ENCODE measurements at regions of chr3 and their contacts with region 1.

Region 1: GRCh38 chr3:52278510-52279069 is at the start of gene WDR82:
- DNase-seq: peak; percentile 67 to 96
- H3K4me3 ChIP-seq: peak within 1 kb of the TSS; percentile 78
- H3K27ac ChIP-seq: peak within 1 kb of the TSS; percentile 75
- H3K4me1 ChIP-seq: peaks cover 23% of the 10 kb centered on the region
- H3K27me3 ChIP-seq: no peaks in the 10 kb centered on the region
- CTCF ChIP-seq: peak; percentile 45
- total RNA-seq, gene WDR82: 34.2 and 44.5 TPM in 2 replicates

Region 2: GRCh38 chr3:51974963-51975851 is 303.4 kb before region 1 on chr3 and contains the start of gene ABHD14A:
- CTCF ChIA-PET with region 1: no interaction called
- POLR2A ChIA-PET with region 1: interaction called, 11 read pairs
- intact Hi-C with region 1: no loop called
- DNase-seq: peak in 1 of 2 experiments; percentile 76
- H3K4me3 ChIP-seq: peak within 1 kb of the TSS; percentile 97
- H3K27ac ChIP-seq: 0 out of 2 replicates have a peak within 1 kb of the TSS, but pooled peaks have one; percentile 5
- H3K4me1 ChIP-seq: peaks cover 8% of the 10 kb centered on the region; the same call in 1 of the 2 replicates
- H3K27me3 ChIP-seq: no peaks in the 10 kb centered on the region
- CTCF ChIP-seq: no peak
- total RNA-seq, gene ABHD14A: 7.1 and 9.9 TPM in 2 replicates

Region 3: GRCh38 chr3:52001443-52001974 is 277.1 kb before region 1 on chr3:
- CTCF ChIA-PET with region 1: no interaction called
- POLR2A ChIA-PET with region 1: no interaction called
- intact Hi-C with region 1: loop called (anchors 5 kb)
- DNase-seq: peak in 1 of 2 experiments; percentile 73
- H3K4me3 ChIP-seq: no peak overlapping the region
- H3K27ac ChIP-seq: no peak overlapping the region
- H3K4me1 ChIP-seq: peaks cover 13% of the 10 kb centered on the region
- H3K27me3 ChIP-seq: no peaks in the 10 kb centered on the region
- CTCF ChIP-seq: peak; percentile 92

Region 4: GRCh38 chr3:52154117-52155094 is 124.2 kb before region 1 on chr3 and contains the start of gene POC1A:
- CTCF ChIA-PET with region 1: interaction called, 3 read pairs
- POLR2A ChIA-PET with region 1: no interaction called
- intact Hi-C with region 1: loop called (anchors 5 kb)
- DNase-seq: peak; percentile 93
- H3K4me3 ChIP-seq: peak within 1 kb of the TSS; percentile 90
- H3K27ac ChIP-seq: peak within 1 kb of the TSS; percentile 68
- H3K4me1 ChIP-seq: peaks cover 16% of the 10 kb centered on the region
- H3K27me3 ChIP-seq: no peaks in the 10 kb centered on the region
- CTCF ChIP-seq: no peak; the same call in 1 of the 2 replicates
- total RNA-seq, gene POC1A: 28.8 and 35.0 TPM in 2 replicates

Region 5: DNA sequence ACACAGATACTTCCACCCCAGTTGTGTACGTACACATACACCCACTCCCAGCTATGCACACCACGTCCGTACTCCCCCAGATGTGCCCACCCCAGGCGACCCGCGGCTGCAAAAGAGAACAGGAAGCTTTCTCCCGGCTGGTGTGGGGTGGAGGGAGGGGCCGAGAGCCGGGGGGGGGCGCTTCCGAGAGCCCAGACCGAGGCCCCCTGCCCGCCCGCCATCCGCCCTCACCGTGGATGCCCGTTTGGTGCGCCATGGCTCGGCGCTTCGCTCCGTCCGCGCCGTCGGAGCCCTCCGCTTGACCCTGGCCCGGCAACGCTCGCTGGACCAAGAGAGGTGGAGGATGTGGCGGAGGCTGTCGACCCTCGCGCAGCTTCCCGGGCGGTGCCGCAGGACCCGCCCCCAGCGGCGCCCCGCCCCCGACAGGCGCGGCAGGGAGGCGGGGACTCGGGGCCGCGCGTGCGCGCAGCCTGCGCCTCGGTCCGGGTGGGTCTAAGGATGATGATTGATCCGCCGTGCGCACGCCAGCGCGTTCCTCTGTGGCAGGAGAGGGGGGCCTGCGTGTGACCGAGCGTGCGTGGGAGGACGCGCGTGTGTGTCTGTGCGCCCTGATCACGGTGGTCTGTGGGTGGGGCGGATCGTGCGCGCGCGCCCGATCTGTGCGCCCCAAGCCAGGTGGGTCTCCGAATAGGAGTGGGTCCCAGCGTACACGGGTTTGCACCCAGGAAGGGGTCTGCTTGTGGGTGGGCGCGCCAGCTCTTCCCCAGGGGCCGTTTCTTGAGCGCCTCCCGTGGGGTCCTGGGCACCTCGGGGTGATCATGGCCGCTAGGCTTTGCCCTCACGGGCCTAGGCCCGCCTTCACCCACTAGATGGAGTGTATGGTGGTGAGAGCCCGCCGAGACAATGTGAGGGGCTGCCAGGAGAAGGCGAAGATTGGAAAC is 39.6 kb before region 1 on chr3 and contains the start of gene TWF2:
- CTCF ChIA-PET with region 1: interaction called, 3 read pairs
- POLR2A ChIA-PET with region 1: interaction called, 6 read pairs
- intact Hi-C with region 1: loop called (anchors 1 kb)
- DNase-seq: peak in 1 of 2 experiments; percentile 84
- H3K4me3 ChIP-seq: peak within 1 kb of the TSS; percentile 93
- H3K27ac ChIP-seq: peak within 1 kb of the TSS; percentile 89
- H3K4me1 ChIP-seq: peaks cover 57% of the 10 kb centered on the region
- H3K27me3 ChIP-seq: no peaks in the 10 kb centered on the region
- CTCF ChIP-seq: no peak
- total RNA-seq, gene TWF2: 102 and 115 TPM in 2 replicates

Region 6: GRCh38 chr3:52385157-52385556 is 106.6 kb after region 1 on chr3:
- CTCF ChIA-PET with region 1: interaction called, 10 read pairs
- POLR2A ChIA-PET with region 1: no interaction called
- intact Hi-C with region 1: no loop called
- DNase-seq: peak; percentile 48 to 64
- H3K4me3 ChIP-seq: no peak overlapping the region
- H3K27ac ChIP-seq: no peak overlapping the region
- H3K4me1 ChIP-seq: no peaks in the 10 kb centered on the region
- H3K27me3 ChIP-seq: no peaks in the 10 kb centered on the region
- CTCF ChIP-seq: peak; percentile 69